ENCODE measurements at regions of chr17 and their contacts with region 1.

Region 1: DNA sequence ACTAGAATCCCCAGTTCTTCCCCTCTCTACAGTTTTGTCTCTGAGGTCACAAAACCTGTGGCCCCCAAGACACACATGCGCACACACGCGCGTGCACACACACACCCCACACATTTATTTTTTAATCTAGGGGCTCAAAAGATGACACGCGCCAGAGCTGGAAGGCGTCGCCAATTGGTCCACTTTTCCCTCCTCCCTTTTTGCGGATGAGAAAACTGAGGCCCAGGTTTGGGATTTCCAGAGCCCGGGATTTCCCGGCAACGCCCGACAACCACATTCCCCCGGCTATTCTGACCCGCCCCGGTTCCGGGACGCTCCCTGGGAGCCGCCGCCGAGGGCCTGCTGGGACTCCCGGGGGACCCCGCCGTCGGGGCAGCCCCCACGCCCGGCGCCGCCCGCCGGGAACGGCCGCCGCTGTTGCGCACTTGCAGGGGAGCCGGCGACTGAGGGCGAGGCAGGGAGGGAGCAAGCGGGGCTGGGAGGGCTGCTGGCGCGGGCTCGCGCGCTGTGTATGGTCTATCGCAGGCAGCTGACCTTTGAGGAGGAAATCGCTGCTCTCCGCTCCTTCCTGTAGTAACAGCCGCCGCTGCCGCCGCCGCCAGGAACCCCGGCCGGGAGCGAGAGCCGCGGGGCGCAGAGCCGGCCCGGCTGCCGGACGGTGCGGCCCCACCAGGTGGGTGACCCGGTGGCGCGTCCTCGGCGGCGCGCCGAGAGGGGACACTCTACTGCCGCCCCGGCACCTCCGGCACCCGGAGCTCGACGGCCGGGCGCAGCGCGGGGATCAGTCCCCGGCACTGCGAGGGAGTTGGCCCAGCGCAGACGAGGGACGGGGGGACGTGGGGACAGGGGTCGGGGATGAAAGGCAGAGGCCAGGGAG is at the start of gene STAT5A:
- DNase-seq: peak; percentile 70
- ATAC-seq: peak; percentile 77
- H3K4me3 Mint-ChIP-seq: peak within 1 kb of the TSS; percentile 94
- H3K27ac Mint-ChIP-seq: peak within 1 kb of the TSS; percentile 97
- H3K4me1 Mint-ChIP-seq: peaks cover 51% of the 10 kb centered on the region
- H3K27me3 Mint-ChIP-seq: no peaks in the 10 kb centered on the region
- CTCF ChIP-seq: no peak
- total RNA-seq, gene STAT5A: 136 and 140 TPM in 2 replicates

Region 2: DNA sequence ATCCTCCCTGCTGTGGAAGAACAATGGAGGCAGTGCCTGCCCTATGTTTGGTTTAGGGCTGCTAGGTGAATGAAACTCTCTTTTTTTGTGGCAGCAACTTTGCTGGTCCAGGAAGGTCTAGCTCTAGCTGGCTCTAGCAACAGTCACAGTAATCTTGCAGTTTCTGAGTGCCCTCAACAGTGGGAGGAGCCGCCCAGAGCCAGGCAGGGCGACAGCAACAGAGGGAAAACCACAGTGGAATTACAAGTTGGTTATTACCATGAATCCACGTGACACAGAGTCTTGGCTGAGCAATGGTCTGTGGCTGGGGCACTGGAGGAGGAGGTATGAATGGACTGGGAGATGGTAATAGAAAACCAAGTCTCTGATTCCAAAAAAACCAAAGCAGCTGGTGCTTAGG is 155.2 kb before region 1 on chr17:
- CTCF ChIA-PET with region 1: no interaction called
- POLR2A ChIA-PET with region 1: no interaction called
- intact Hi-C with region 1: loop called (anchors 5 kb)
- DNase-seq: no peak
- ATAC-seq: peak; percentile 45
- H3K4me3 Mint-ChIP-seq: peak overlapping the region; percentile 49
- H3K27ac Mint-ChIP-seq: peak overlapping the region; percentile 77
- H3K4me1 Mint-ChIP-seq: peaks cover 64% of the 10 kb centered on the region
- H3K27me3 Mint-ChIP-seq: no peaks in the 10 kb centered on the region
- CTCF ChIP-seq: no peak

Region 3: GRCh38 chr17:42193969-42194899 is 93.9 kb before region 1 on chr17 and contains the start of gene GHDC:
- CTCF ChIA-PET with region 1: no interaction called
- POLR2A ChIA-PET with region 1: interaction called, 19 read pairs
- intact Hi-C with region 1: no loop called
- DNase-seq: peak; percentile 74
- ATAC-seq: peak; percentile 90
- H3K4me3 Mint-ChIP-seq: peak within 1 kb of the TSS; percentile 98
- H3K27ac Mint-ChIP-seq: peak within 1 kb of the TSS; percentile 96
- H3K4me1 Mint-ChIP-seq: peaks cover 33% of the 10 kb centered on the region
- H3K27me3 Mint-ChIP-seq: no peaks in the 10 kb centered on the region
- CTCF ChIP-seq: no peak
- total RNA-seq, gene GHDC: 26.5 and 29.1 TPM in 2 replicates

Region 4: GRCh38 chr17:42248351-42249179 is 39.6 kb before region 1 on chr17:
- CTCF ChIA-PET with region 1: interaction called, 5 read pairs
- POLR2A ChIA-PET with region 1: interaction called, 61 read pairs
- intact Hi-C with region 1: loop called (anchors 1 kb)
- DNase-seq: peak; percentile 42
- ATAC-seq: peak; percentile 99
- H3K4me3 Mint-ChIP-seq: peak overlapping the region; percentile 86
- H3K27ac Mint-ChIP-seq: peak overlapping the region; percentile 96
- H3K4me1 Mint-ChIP-seq: peaks cover 52% of the 10 kb centered on the region
- H3K27me3 Mint-ChIP-seq: no peaks in the 10 kb centered on the region
- CTCF ChIP-seq: no peak

Region 5: GRCh38 chr17:42312285-42313130 is 24.3 kb after region 1 on chr17:
- CTCF ChIA-PET with region 1: interaction called, 4 read pairs
- POLR2A ChIA-PET with region 1: interaction called, 23 read pairs
- intact Hi-C with region 1: no loop called
- DNase-seq: peak; percentile 70
- ATAC-seq: peak; percentile 77
- H3K4me3 Mint-ChIP-seq: peak overlapping the region; percentile 53
- H3K27ac Mint-ChIP-seq: peak overlapping the region; percentile 30
- H3K4me1 Mint-ChIP-seq: peaks cover 55% of the 10 kb centered on the region
- H3K27me3 Mint-ChIP-seq: no peaks in the 10 kb centered on the region
- CTCF ChIP-seq: no peak

Region 6: DNA sequence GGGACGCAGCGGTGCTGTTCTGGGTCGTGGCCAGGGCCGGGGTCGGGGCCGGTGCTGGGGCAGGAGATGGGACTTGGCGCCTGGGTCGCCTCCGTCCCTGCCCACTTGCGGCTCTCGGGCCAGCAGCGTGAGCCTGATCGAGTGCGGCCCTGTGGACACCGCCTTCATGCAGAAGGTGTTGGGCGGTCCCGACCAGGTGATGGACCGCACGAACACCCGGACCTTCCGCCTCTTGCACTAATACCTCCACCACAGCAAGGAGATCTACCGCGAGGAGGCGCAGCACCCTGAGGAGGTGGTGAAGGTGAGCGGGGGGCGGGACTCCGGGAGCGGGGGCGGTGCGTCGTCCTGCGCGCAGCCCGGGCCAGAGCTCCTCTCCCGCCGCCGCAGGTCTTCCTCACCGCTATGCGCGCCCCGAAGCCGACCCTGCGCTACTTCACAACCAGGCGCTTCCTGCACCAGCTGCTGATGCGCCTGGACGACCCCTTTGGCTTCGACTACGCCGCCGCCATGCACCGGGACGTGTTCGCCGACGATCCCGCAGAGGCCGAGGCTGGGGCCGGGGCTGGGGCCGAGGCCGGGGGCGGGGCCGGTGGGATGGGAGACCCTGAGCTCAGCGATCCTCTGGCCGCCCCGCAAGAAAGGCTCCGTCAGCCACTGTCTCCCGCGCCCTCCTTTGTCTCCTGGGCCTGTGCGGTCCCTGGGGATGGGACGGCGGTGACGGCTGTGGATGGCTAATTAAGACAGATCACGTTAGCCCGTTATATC is 260.1 kb after region 1 on chr17:
- CTCF ChIA-PET with region 1: no interaction called
- POLR2A ChIA-PET with region 1: no interaction called
- intact Hi-C with region 1: no loop called
- DNase-seq: peak; percentile 81
- ATAC-seq: peak; percentile 97
- H3K4me3 Mint-ChIP-seq: peak overlapping the region; percentile 66
- H3K27ac Mint-ChIP-seq: no peak overlapping the region
- H3K4me1 Mint-ChIP-seq: peaks cover 17% of the 10 kb centered on the region
- H3K27me3 Mint-ChIP-seq: no peaks in the 10 kb centered on the region
- CTCF ChIP-seq: no peak